ENCODE measurements at regions of chr6 and their contacts with region 1.

Region 1: GRCh38 chr6:168370310-168370991 is 50.9 kb upstream of the DACT2 start:
- DNase-seq: peak; percentile 89
- ATAC-seq: peak; percentile 89

Region 2: GRCh38 chr6:168884646-168885086 is 514.2 kb after region 1 on chr6:
- intact Hi-C with region 1: loop called (anchors 5 kb)
- DNase-seq: peak; percentile 83
- ATAC-seq: peak; percentile 87

Measured in sciatic nerve (tissue), 2 donors.